ENCODE measurements at regions of chr13 and their contacts with region 1.

Region 1: DNA sequence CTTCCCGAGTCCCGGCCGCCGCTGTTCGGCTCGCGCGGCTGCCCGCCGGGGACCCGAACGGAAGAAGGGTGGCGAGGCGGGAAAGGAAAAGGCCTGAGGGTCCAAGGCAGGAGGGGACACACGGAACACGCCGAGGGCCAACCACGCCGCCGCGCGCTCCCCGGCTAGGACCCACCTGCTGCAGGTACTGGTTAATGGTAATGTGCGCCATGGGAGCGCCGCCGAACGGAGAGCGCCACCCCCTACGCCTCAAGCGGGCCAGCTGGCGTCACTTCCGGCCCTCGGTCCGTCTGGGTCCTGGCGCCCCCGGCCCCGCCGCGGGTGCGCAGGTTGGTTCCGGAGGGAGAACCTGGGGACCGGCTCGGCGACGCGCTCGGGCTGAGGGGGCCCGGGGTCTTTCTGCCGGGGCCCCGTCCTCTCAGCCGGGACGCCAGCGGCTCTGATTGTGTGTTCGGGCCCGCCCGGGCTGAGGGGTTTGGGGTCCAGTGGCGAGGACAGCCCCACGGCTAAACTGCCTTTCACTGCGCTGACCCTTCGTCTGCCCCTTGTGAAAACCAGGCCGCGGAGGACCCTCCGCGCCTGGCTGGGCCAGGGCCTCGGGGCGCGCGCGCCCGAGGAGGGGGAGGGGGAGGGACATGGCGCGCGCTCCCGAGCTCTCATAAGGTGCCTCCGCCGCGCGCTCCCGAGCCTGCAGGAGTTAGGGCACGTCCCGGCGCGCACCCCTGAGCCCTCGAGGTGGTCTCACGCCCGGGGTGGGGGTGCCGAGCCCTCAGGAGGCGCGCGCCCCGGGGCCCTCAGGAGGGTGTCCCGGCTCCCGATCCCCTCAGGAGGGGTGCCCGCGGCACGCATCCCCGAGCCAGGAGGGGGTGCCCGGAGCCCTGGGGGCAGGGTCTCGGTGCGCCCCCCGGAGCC is at the start of gene PCID2:
- DNase-seq: peak; percentile 69 to 96 (median 91)

Region 2: GRCh38 chr13:113153810-113154748 is 54.6 kb before region 1 on chr13:
- intact Hi-C with region 1: loop called (anchors 5 kb)
- DNase-seq: peak; percentile 64 to 94 (median 85)

Region 3: DNA sequence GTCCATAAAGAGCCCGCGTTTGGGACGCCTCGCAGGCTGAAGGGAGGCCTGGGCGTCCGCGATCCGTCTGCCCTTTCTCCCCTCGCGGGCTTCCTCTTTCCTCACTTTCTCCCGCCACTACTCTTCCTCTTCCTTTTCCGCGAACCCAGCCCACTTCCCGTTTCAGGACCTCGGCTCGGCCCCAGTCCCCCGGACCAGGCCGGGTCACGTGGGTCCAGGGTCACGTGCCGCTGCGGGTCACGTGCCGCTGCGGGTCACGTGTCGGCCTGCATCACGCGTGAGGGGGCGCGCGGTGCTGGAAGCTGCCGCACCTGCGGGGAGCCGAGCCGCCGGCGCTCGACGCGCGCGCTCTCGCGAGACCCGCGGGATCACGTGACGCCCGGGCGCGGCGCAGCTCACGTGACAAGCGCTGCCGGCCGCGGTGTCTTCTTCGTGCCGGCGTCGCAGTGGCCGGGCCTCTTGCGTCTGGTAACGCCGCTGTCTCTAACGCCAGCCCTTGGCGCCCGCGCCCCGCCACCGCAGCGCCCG is 88.2 kb after region 1 on chr13 and contains the start of gene LAMP1:
- intact Hi-C with region 1: loop called (anchors 5 kb)
- DNase-seq: peak; percentile 79 to 98 (median 94)

Measured in head of caudate nucleus (tissue), 42 donors.